ENCODE measurements at regions of chr12 and their contacts with region 1.

Region 1: DNA sequence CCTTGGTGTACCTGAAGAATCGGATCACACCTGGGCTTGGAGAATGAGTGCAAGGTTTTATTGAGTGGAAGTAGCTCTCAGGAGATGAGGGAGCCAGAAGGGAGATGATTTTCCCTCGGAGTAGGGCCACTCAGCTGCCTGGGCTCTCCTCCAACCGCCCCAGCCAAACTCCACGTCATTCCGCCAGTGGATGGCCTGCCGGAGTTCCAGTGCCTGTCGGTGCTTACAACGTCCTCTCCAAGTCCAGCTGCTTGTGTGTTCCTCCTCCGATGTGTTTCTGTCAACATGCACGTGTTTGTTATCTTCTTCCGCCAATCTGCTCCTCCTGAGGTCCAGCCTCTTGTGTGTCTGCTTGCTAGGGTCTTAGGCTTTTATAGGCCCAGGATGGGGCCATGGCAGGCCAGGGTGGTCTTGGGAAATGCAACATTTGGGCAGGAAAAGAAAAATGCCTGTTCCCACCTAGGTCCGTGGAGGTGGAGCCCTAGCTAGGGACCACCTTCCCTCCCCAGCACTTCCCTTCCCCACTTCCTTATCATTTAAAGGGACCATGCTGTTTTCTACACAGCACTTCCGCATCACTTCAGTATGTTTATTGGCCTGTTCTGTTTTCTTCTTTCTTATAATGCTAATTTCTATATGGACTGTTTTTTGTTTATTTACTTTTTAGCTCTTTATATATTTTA is 343.2 kb downstream of the PDZRN4 start:
- DNase-seq: no peak
- ATAC-seq: peak; percentile 80

Region 2: GRCh38 chr12:39883411-39883810 is 1647.9 kb before region 1 on chr12:
- intact Hi-C with region 1: loop called (anchors 5 kb)
- DNase-seq: no peak
- ATAC-seq: no peak

Region 3: GRCh38 chr12:41339784-41340183 is 191.5 kb before region 1 on chr12:
- intact Hi-C with region 1: no loop called
- DNase-seq: no peak
- ATAC-seq: no peak

Region 4: DNA sequence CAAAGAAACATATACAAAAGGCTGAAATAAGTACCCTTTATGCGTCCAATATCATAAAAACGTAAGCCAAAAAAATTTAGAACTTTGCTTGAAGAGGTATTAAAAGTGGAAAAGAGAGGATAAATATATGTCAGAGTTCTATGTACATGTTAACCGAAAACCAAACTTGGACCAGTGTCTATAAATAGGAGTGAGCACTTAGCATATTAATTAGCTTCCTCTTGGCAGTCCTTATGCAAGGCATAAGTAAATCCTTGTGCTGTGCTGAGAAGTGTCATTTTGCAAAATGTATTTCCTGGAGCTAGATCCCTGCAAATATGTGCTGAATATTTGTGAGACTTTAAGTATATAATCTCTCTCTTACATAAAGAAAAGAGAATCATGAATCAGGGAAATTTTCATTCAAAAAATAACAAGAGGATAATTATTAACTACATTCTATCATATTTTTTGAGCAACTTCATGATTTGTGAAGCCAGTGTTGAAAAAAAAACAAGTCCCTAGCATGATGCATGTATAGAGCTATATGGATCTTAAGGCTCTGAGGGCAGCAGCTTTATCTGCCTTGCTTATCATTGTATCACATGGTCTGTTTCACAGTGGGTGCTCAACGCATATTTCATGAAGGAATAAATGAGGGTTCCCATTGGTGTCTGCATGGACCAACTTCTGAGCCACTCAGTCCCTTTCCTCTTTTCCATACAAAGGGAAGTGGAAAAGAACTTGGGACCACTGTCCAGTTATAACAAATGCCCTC is 17.1 kb before region 1 on chr12:
- intact Hi-C with region 1: no loop called
- DNase-seq: no peak
- ATAC-seq: no peak

Region 5: DNA sequence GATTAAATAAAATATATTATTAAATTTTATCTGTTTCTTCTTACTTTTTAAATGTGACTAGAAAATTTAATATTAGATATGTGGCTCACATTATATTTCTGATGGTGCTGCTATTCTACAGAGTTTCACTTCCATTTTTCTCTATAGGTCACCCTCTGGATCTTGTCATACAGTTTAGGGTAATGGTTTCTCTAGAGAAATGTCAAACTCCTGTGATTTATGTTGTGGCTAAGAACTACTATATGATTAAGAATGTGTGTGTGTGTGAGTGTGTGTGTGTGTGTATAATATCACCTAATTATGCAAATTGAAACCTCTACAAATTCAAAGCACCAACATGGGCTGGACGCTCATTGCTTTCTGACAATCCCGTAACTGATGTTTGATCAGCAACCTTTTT is 1694.9 kb after region 1 on chr12:
- intact Hi-C with region 1: loop called (anchors 5 kb)
- DNase-seq: no peak
- ATAC-seq: no peak

Measured in sciatic nerve (tissue), 2 donors.